Activated CD4-positive, alpha-beta T cell treated with anti-CD3 and anti-CD28 coated beads for 36 hours (primary cell): ENCODE measurements at regions of chr4 and their contacts with region 1.

Region 1: GRCh38 chr4:74675673-74676279 is 118.5 kb downstream of the BTC start:
- DNase-seq: peak; percentile 11
- ATAC-seq: peak; percentile 39
- H3K4me3 Mint-ChIP-seq: no peak overlapping the region
- H3K27ac Mint-ChIP-seq: no peak overlapping the region
- H3K4me1 Mint-ChIP-seq: peaks cover 2% of the 10 kb centered on the region
- H3K27me3 Mint-ChIP-seq: peaks cover 9% of the 10 kb centered on the region

Region 2: DNA sequence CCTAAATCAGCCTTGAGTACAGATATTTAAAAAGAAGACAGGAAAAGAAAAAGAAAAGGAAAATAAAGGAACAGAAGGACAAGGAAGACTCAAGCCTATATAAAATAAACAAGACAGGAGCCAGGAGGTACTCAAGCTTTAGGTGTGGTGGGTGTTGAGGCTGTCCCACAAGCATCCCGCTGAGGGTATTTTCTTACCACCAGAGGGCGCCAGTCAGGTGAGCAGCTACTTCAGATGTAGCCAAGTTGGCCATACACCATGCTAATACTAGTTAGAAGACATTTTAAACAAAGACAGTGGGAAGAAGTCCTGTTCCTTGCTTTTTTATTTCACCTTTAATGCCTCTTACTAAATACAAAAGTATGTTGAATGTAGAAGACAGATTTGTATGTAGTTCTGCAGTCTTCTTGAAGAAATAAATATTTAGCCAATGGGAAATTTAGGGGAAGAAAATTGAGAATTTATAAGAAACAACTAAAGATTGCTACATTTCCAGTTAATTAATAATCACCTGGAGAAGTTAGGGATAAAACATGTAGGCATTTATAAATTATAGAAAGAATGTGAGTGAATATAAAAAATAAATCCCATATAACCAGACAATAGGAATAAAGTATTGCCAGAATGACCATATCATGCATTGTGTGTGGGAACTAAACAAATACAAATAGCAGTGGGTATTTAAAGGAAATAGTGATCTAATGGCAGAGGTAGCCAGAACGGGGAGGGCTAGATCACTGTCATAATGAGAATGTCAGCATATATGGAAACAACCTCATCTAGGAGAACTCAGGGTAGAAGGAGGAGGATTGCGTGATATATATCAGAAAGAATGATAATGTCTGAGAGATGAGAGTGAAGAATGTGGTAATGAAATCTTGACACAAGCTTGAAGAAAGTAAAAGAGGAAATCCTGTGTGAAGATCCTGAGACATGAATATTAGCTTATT is 446.8 kb before region 1 on chr4:
- CTCF ChIA-PET with region 1: interaction called, 24 read pairs
- POLR2A ChIA-PET with region 1: no interaction called
- intact Hi-C with region 1: loop called (anchors 1 kb)
- DNase-seq: peak; percentile 87
- ATAC-seq: peak; percentile 85
- H3K4me3 Mint-ChIP-seq: no peak overlapping the region
- H3K27ac Mint-ChIP-seq: no peak overlapping the region
- H3K4me1 Mint-ChIP-seq: peaks cover 8% of the 10 kb centered on the region
- H3K27me3 Mint-ChIP-seq: no peaks in the 10 kb centered on the region

Region 3: GRCh38 chr4:74370912-74371311 is 304.9 kb before region 1 on chr4:
- CTCF ChIA-PET with region 1: interaction called, 49 read pairs
- POLR2A ChIA-PET with region 1: no interaction called
- intact Hi-C with region 1: loop called in 1 of 2 experiments (anchors 2 kb)
- DNase-seq: peak; percentile 41
- ATAC-seq: peak; percentile 78
- H3K4me3 Mint-ChIP-seq: no peak overlapping the region
- H3K27ac Mint-ChIP-seq: no peak overlapping the region
- H3K4me1 Mint-ChIP-seq: peaks cover 4% of the 10 kb centered on the region
- H3K27me3 Mint-ChIP-seq: peaks cover 12% of the 10 kb centered on the region

Region 4: GRCh38 chr4:74531963-74532794 is 143.6 kb before region 1 on chr4:
- CTCF ChIA-PET with region 1: interaction called, 4 read pairs
- POLR2A ChIA-PET with region 1: no interaction called
- intact Hi-C with region 1: loop called (anchors 1 kb)
- DNase-seq: peak; percentile 20
- ATAC-seq: peak; percentile 74
- H3K4me3 Mint-ChIP-seq: no peak overlapping the region
- H3K27ac Mint-ChIP-seq: no peak overlapping the region
- H3K4me1 Mint-ChIP-seq: no peaks in the 10 kb centered on the region
- H3K27me3 Mint-ChIP-seq: peaks cover 2% of the 10 kb centered on the region